Posterior vena cava (tissue), 2 donors: ENCODE measurements at regions of chr20 and their contacts with region 1.

Region 1: GRCh38 chr20:11544029-11544678 is 373.5 kb upstream of the BTBD3 start:
- DNase-seq: no peak

Region 2: DNA sequence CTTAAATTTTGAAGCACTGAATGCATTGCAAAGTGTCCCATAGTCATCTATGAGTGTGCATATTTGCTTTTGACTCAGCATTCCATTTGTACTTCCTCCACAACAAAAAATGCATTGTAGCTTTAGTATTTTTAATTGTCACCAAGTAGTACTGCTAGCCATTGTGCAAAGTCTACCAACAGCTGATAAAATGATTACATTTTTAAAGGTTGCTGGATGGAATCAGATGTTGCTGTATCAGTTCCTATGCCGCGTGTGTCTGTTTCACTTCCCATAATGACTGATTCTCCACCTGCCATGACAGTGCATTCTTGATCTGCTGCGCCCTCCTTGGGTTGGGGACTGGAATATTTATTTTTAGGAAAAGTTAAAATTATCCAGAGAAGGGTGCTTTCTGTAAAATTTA is 1067.8 kb before region 1 on chr20:
- intact Hi-C with region 1: loop called in 1 of 2 experiments (anchors 10 kb)
- DNase-seq: no peak

Region 3: DNA sequence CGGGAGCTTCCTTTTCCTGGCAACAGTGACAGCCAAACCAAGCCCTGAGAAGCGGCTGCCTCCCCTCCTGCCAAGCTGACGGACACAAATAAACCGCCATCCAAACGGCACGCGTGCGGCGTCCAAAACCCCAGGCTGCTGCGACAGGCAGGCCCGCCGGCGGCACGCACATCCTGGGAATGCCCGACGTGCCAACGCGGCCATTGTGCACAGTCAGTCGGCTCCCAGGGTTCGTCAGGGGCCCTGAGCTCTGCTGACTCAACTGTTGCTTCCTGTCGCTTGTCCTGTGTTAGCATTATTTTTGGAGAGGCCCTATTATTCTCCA is 877.1 kb before region 1 on chr20:
- intact Hi-C with region 1: loop called in 1 of 2 experiments (anchors 10 kb)
- DNase-seq: no peak

Region 4: DNA sequence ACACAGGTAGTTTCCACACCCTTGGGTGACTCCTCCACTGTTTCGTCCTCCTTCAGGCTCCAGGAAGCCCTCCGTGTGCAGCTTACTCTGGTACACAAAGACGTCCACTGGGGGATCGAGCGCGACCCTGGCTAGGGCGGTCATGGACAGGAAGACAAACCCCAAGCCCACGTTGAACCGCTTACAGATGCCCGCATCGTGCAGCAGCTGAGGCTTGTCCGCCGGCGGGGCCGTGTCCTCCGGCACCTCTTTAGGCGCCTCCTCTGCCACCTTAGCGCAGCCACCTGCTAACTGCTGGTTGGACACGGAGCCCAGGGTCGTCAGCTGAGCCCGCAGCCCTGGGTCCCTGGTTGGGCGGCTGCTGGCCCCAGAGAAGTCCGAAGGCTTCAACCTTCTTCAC is 64.6 kb after region 1 on chr20:
- intact Hi-C with region 1: no loop called
- DNase-seq: no peak